ENCODE measurements at regions of chr6 and their contacts with region 1.

Region 1: GRCh38 chr6:149484733-149485700 is at the start of gene ZC3H12D:
- DNase-seq: peak; percentile 76 to 92 (median 89)
- H3K4me3 ChIP-seq: peak within 1 kb of the TSS in 3 of 7 experiments; percentile 6 to 56 (median 47)
- H3K27ac ChIP-seq: peak within 1 kb of the TSS; percentile 29 to 49
- H3K4me1 ChIP-seq: peaks cover 19 to 55% (median 46%) of the 10 kb centered on the region in 4 experiments
- H3K27me3 ChIP-seq: no peaks in the 10 kb centered on the region

Region 2: DNA sequence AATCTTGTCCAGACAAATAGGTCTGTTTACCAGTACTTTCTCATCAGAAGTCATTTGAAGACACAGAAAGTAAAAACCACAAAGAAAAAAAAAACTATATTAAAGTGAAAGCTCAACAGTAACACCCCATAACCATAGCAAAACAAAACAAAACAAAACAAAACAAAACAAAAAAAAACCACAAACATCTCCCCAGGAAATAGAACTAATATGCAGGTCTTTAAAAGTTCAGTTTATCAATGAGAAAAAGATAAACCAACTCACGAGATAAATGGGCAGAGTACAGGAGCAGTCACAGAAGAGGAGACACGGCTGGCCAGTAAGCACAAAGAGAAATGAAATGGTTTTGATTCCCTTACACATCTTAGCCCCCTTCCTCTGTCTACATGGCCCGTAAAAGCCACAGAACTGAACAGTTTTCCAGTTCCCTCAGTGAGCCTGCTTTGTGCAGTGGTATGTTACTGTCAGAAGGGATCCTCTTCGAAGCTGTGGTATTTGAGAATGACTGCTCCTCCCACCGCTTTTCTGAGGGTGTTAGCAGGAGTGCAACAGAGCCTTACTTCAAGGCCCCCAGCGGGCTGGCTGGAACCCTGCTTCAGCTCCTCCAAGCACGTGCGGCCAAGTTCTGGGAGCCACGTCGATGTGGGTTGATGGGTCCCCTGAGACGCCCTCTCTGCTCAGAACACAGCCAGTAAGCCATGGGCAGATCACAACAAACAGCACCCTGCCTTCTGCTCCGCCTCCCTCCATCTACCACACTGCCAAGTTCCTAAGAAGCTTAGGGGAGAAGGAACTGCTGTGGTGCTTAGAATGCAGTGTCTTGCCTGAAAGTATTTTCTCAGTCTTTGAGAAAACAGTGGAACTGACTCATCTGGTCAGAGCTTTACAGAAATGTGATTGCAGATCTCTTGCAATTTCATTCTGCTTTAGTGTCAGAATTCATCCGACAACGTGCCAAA is 724.2 kb before region 1 on chr6:
- CTCF ChIA-PET with region 1: no interaction called
- POLR2A ChIA-PET with region 1: no interaction called
- DNase-seq: peak; percentile 40 to 67 (median 57)
- H3K4me3 ChIP-seq: peak overlapping the region in 3 of 7 experiments; percentile 15 to 55 (median 34)
- H3K27ac ChIP-seq: peak overlapping the region in 1 of 2 experiments; percentile 52
- H3K4me1 ChIP-seq: peaks cover 28 to 52% (median 38%) of the 10 kb centered on the region in 4 experiments
- H3K27me3 ChIP-seq: peaks cover 0 to 3% (median 0%) of the 10 kb centered on the region in 5 experiments

Region 3: DNA sequence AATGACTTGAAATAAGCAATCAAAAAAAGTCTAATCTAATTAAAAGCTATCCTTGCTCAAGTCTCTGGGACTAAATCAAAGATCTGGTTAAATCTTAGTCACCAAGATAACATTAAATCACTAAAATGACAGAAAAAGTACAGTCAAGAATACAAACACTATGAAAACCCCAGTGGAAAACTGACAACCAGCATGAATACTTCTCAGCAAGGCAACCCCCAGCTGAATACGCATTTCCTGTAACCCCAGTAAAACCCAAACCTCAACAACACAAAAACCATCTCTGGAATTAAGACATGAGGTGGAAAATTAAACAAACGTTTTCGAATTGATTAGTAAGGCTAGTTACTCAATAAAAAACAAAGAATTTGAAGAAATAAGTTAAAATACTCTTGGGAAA is 23.5 kb after region 1 on chr6:
- CTCF ChIA-PET with region 1: interaction called, 33 read pairs
- POLR2A ChIA-PET with region 1: no interaction called
- DNase-seq: no peak
- H3K4me3 ChIP-seq: no peak overlapping the region
- H3K27ac ChIP-seq: no peak overlapping the region
- H3K4me1 ChIP-seq: peaks cover 0 to 4% (median 0%) of the 10 kb centered on the region in 4 experiments
- H3K27me3 ChIP-seq: no peaks in the 10 kb centered on the region

Region 4: DNA sequence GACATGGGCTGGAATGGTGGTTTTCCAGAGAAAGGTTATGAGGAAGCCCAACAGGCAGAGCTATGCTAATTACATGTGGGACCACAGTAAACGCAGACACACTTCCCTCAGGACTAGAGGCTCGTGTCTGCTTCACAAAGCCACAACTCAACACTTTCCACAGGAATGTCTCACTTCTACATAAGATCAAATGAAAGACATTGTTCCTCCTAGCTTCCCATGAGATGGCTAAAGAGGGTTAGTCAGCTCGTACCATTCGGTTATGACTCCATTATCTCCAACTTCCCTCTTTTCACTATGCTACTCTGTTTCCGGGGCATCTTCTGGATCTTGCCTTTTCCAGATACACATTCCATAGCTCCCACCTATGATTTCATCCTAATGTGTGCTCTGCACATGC is 28.9 kb after region 1 on chr6:
- CTCF ChIA-PET with region 1: interaction called, 33 read pairs
- POLR2A ChIA-PET with region 1: no interaction called
- DNase-seq: no peak
- H3K4me3 ChIP-seq: no peak overlapping the region
- H3K27ac ChIP-seq: no peak overlapping the region
- H3K4me1 ChIP-seq: peaks cover 0 to 2% (median 0%) of the 10 kb centered on the region in 4 experiments
- H3K27me3 ChIP-seq: no peaks in the 10 kb centered on the region